Right ventricle myocardium superior (tissue), 1 donor: ENCODE measurements at regions of chr6 and their contacts with region 1.

Region 1: DNA sequence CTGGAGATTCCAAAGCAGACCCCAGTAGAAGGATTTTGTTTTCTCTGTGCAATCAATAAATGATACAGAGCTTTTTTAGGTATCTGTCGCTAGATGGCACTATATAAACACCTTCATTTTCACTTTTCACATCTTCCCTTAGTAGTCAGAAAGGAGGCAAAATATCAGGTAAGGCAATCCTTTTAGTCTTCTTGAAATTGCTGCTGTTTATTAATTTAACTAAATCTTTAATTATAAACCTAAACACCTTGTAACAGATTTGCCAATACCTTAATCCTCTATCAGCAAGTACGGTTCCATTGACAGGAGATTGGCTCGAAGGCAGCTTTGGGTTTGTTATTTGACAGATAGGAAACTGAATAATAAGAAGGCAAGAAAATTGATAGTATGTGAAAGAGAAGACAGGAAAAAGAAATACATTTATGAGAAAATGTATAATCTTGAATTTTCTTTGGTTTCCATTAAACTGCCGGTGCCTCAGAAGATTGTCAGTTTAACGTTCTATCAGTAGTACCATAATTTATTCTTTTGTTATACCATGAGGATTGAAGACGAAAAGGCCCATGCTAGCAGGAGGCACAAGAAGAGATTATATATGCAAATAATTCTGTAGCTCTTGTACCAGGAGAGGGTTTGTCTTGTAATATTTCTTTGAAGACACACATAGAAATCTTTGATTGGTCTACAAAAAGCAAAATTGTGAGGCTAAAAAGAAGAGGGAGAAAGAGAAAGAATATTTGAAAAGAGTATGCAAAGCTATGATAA is 23.5 kb upstream of the IBTK start:
- DNase-seq: no peak
- ATAC-seq: no peak

Region 2: GRCh38 chr6:83057705-83058321 is 786.8 kb after region 1 on chr6:
- intact Hi-C with region 1: loop called (anchors 5 kb)
- DNase-seq: no peak
- ATAC-seq: peak; percentile 75